PC-9 (cell line): ENCODE measurements at regions of chr1 and their contacts with region 1.

Region 1: DNA sequence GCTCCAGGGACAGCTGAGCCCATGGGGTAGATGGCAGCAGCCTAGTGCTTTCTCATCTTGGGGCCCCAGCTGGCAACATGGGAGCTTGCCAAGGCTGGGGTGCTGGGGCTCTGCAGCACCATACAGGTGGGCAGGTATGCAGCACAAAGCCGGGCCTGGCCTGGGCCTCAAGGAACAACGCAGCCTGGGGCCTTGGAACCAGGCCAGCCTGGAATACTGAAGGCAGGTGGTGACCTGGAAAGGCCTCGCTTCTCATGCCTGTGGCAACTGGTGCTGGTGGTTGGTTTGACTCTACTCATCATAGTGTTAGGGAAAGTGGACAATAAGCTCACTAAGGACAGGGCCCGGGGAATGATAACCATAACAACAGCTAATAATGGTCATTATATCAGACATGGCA is 27.0 kb upstream of the SDHB start:
- DNase-seq: peak in 1 of 2 experiments; percentile 60
- H3K4me3 ChIP-seq: no peak overlapping the region
- H3K27ac ChIP-seq: no peak overlapping the region
- H3K4me1 ChIP-seq: no peaks in the 10 kb centered on the region
- H3K27me3 ChIP-seq: no peaks in the 10 kb centered on the region
- CTCF ChIP-seq: no peak

Region 2: GRCh38 chr1:16971341-16972188 is 109.3 kb before region 1 on chr1:
- CTCF ChIA-PET with region 1: no interaction called
- POLR2A ChIA-PET with region 1: no interaction called
- intact Hi-C with region 1: no loop called
- DNase-seq: peak in 1 of 2 experiments; percentile 43
- H3K4me3 ChIP-seq: no peak overlapping the region
- H3K27ac ChIP-seq: no peak overlapping the region
- H3K4me1 ChIP-seq: no peaks in the 10 kb centered on the region
- H3K27me3 ChIP-seq: no peaks in the 10 kb centered on the region
- CTCF ChIP-seq: no peak

Region 3: GRCh38 chr1:17119076-17119772 is 38.3 kb after region 1 on chr1 and contains the start of gene PADI2:
- CTCF ChIA-PET with region 1: no interaction called
- POLR2A ChIA-PET with region 1: no interaction called
- intact Hi-C with region 1: loop called (anchors 1 kb)
- DNase-seq: peak; percentile 54 to 85
- H3K4me3 ChIP-seq: peak within 1 kb of the TSS; percentile 52
- H3K27ac ChIP-seq: no peak within 1 kb of the TSS
- H3K4me1 ChIP-seq: peaks cover 4% of the 10 kb centered on the region; the same call in 1 of the 2 replicates
- H3K27me3 ChIP-seq: no peaks in the 10 kb centered on the region
- CTCF ChIP-seq: no peak
- total RNA-seq, gene PADI2: 14.0 and 16.7 TPM in 2 replicates